Activated CD4-positive, alpha-beta memory T cell treated with anti-CD3 and anti-CD28 coated beads, Interleukin-2, amount 10 ng/mL, durations not matched to agents 7 days and 5 days (primary cell): ENCODE measurements at regions of chr14 and their contacts with region 1.

Region 1: DNA sequence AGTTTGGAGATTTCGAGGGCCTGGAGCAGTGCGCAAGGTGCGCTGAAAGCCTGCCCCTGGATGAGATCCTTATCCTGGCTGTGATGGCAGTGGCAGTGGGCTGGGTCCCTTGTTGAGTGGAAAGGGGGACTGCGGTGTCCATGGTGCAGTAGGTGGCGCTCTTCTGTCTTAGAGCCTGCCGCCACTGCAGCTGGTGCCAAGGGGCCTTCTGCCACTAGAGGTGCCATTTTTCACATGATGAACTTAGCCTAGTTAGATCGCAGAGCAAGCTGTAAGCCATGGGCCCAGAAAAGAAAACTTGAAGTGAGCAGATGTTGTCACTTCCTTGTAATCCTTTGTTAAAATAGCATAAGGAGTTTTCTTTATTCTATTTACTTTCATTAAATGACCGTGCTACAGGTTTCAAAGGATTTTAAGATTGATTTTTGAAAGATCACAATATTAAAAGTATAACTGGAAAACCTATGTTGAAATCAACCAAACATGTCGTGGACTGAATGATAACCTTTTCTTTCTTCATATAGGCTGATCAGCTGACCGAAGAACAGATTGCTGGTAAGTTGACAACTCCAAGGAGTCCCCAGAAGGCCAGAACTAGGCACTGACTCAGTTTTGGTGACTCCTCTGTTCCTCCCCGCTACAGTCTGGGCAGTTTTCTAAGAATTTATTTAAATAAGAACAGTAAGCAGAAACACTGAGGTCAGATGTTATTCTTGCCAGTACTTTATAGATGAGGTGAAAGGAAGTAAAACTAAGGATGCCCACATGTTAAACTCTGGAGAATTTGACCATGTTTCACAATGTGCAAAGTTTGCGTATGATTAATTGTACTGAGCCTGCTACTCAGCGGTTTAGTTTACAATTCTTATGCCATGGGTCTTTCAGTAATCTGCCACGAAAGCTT is 3.0 kb downstream of the CALM1 start:
- DNase-seq: peak; percentile 89
- H3K4me3 Mint-ChIP-seq: peak overlapping the region; percentile 97
- H3K27ac Mint-ChIP-seq: peak overlapping the region; percentile 99
- H3K4me1 Mint-ChIP-seq: peaks cover 55% of the 10 kb centered on the region
- H3K27me3 Mint-ChIP-seq: no peaks in the 10 kb centered on the region

Region 2: DNA sequence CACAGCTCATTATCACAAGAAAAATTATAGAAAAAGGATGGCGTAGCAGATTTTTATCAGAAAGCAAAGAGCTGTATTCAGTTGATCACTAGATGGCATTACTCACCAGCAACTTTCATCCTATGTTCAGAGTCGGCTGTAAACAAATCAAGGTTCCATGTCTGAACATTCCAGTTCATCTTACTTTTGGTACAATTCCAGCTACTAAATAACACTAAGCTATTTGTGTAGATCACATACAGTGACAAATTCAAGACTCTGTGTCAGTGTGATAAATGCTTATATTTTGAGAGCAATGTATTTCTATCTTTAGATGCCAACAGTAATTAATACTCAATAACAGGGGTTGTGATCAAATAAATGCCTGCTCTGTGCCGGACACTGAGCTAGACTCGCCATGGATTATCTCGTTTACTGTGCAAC is 98.1 kb before region 1 on chr14:
- CTCF ChIA-PET with region 1: interaction called, 11 read pairs
- POLR2A ChIA-PET with region 1: interaction called, 5 read pairs
- DNase-seq: no peak
- H3K4me3 Mint-ChIP-seq: no peak overlapping the region
- H3K27ac Mint-ChIP-seq: no peak overlapping the region
- H3K4me1 Mint-ChIP-seq: peaks cover 11% of the 10 kb centered on the region
- H3K27me3 Mint-ChIP-seq: no peaks in the 10 kb centered on the region

Region 3: GRCh38 chr14:90331497-90332435 is 68.0 kb before region 1 on chr14 and contains the start of gene NRDE2:
- CTCF ChIA-PET with region 1: interaction called, 9 read pairs
- POLR2A ChIA-PET with region 1: interaction called, 14 read pairs
- DNase-seq: peak; percentile 96
- H3K4me3 Mint-ChIP-seq: peak within 1 kb of the TSS; percentile 95
- H3K27ac Mint-ChIP-seq: peak within 1 kb of the TSS; percentile 83
- H3K4me1 Mint-ChIP-seq: peaks cover 25% of the 10 kb centered on the region
- H3K27me3 Mint-ChIP-seq: peaks cover 16% of the 10 kb centered on the region
- total RNA-seq, gene NRDE2: 20.3 to 21.7 TPM

Region 4: DNA sequence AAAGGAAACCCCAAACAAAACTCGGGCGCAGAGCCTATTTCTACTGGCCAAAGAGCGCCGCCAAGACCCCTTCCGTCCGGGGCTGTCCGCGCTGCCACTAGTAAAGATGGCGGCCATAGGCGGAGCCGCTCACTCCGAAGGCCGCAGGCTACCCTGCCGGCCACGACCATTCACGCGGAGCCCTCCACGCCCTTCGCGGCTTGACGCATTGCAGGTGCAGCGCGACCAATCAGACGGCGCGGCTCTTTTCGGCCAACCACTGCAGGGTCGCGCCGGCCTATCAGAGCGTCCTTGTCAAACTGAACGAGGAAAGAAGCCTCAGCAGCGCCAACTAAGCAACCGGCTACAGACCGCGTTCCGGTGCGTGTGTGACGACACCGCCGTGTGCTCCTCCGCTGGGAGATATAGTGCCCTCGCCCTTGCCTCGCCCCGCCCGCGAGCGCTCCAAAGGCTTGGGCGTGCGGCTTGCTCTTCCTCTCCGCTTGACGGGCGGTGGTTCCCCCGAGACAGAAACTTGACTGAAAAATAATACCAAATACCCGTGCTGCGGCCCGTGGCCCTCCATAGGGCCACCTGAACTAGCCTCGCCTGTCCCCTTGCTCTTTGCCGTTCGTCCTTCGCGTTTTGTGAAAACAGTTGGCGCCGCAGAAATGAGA is 16.6 kb before region 1 on chr14:
- CTCF ChIA-PET with region 1: interaction called, 31 read pairs
- POLR2A ChIA-PET with region 1: interaction called, 733 read pairs
- DNase-seq: peak; percentile 99
- H3K4me3 Mint-ChIP-seq: no peak overlapping the region
- H3K27ac Mint-ChIP-seq: no peak overlapping the region
- H3K4me1 Mint-ChIP-seq: peaks cover 20% of the 10 kb centered on the region
- H3K27me3 Mint-ChIP-seq: no peaks in the 10 kb centered on the region

Region 5: GRCh38 chr14:90697577-90698206 is 297.9 kb after region 1 on chr14:
- CTCF ChIA-PET with region 1: interaction called, 12 read pairs
- POLR2A ChIA-PET with region 1: interaction called, 4 read pairs
- DNase-seq: peak; percentile 77
- H3K4me3 Mint-ChIP-seq: no peak overlapping the region
- H3K27ac Mint-ChIP-seq: no peak overlapping the region
- H3K4me1 Mint-ChIP-seq: peaks cover 8% of the 10 kb centered on the region
- H3K27me3 Mint-ChIP-seq: no peaks in the 10 kb centered on the region